ENCODE measurements at regions of chr9 and their contacts with region 1.

Region 1: GRCh38 chr9:16726718-16727451 is 143.6 kb downstream of the BNC2 start:
- DNase-seq: peak; percentile 66
- H3K4me3 ChIP-seq: peak overlapping the region; percentile 46 to 64 (median 52)
- H3K27ac ChIP-seq: peak overlapping the region; percentile 74 to 88 (median 85)
- H3K4me1 ChIP-seq: peaks cover 0 to 8% (median 0%) of the 10 kb centered on the region in 4 donors
- H3K27me3 ChIP-seq: no peaks in the 10 kb centered on the region
- CTCF ChIP-seq: no peak
- EP300 ChIP-seq: no peak
- POLR2A ChIP-seq: peak; percentile 35

Region 2: GRCh38 chr9:16207161-16207560 is 519.7 kb before region 1 on chr9:
- in situ Hi-C with region 1: no loop called
- intact Hi-C with region 1: loop called (anchors 10 kb)
- DNase-seq: no peak
- H3K4me3 ChIP-seq: no peak overlapping the region
- H3K27ac ChIP-seq: peak overlapping the region in 1 of 4 donors; percentile 11
- H3K4me1 ChIP-seq: peaks cover 0 to 4% (median 2%) of the 10 kb centered on the region in 4 donors
- H3K27me3 ChIP-seq: no peaks in the 10 kb centered on the region
- CTCF ChIP-seq: no peak
- EP300 ChIP-seq: no peak
- POLR2A ChIP-seq: no peak

Region 3: GRCh38 chr9:16611983-16612382 is 114.9 kb before region 1 on chr9:
- in situ Hi-C with region 1: no loop called
- intact Hi-C with region 1: no loop called
- DNase-seq: no peak
- H3K4me3 ChIP-seq: no peak overlapping the region
- H3K27ac ChIP-seq: no peak overlapping the region
- H3K4me1 ChIP-seq: no peaks in the 10 kb centered on the region
- H3K27me3 ChIP-seq: no peaks in the 10 kb centered on the region
- CTCF ChIP-seq: no peak
- EP300 ChIP-seq: no peak
- POLR2A ChIP-seq: no peak

Region 4: DNA sequence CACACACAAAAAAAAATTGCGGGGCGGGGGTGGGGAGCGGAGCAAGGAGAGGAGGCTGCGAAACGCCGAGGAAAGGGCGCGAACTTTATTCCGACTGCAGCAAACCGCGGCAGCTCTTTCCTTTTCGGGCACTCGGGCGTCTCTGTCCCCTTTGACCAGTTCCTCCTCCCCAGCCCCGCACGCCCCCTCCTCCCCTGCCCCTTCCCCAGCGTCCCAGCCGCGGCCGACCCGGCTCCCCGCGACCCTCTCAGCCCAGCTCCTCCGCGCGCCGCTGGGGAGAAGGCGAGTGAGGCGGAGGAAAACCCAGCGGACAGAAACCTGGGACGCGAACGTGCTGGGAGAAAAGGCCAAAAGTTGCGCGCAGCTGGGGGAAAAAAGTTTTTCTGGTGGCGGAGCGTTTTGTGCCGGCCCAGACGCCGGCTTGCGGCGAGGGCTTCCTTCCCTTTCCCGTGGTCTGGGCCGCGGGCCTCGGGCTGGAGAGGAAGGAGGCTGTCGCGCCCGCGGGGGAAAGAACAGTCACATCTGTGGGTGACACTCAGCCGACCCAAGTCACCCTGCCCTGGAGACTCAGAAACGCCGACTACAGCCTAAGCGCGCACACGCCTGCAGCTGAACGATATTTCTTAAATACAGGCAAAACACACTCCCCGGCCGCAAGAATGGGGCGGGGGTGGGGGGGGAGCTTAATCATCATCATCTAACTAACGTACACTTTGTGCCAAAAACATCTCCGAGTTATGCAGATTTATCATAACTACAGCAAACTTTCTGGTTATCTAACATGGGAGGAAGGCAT is 144.7 kb after region 1 on chr9:
- in situ Hi-C with region 1: loop called in 1 of 4 experiments (anchors 10 kb)
- intact Hi-C with region 1: loop called (anchors 10 kb)
- DNase-seq: peak; percentile 44
- H3K4me3 ChIP-seq: peak overlapping the region; percentile 61 to 90 (median 70)
- H3K27ac ChIP-seq: peak overlapping the region; percentile 82 to 93 (median 90)
- H3K4me1 ChIP-seq: peaks cover 3 to 29% (median 5%) of the 10 kb centered on the region in 4 donors
- H3K27me3 ChIP-seq: peaks cover 45% of the 10 kb centered on the region
- CTCF ChIP-seq: peak in 1 of 5 experiments; percentile 6
- EP300 ChIP-seq: no peak
- POLR2A ChIP-seq: no peak

Region 5: DNA sequence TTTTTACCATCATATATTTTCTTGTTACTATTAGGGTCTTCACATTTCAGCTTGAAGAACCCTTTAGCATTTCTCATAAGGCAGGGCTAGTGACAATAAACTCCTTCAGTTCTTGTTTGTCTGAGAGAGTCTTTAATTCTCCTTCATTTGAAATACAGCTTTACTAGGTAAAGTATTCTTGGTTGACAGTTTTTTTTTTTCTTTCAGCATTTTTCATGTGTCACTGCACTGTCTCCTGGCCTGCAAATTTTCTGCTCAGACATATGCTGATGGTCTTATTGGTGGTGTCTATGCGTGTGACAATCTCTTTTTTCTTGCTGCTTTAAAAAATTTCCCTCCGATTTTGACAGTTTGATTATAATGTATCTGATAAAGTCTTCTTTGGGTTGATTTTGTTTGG is 1251.9 kb after region 1 on chr9:
- in situ Hi-C with region 1: no loop called
- intact Hi-C with region 1: no loop called
- DNase-seq: no peak
- H3K4me3 ChIP-seq: no peak overlapping the region
- H3K27ac ChIP-seq: no peak overlapping the region
- H3K4me1 ChIP-seq: no peaks in the 10 kb centered on the region
- H3K27me3 ChIP-seq: no peaks in the 10 kb centered on the region
- CTCF ChIP-seq: no peak
- EP300 ChIP-seq: no peak
- POLR2A ChIP-seq: no peak

Measured in transverse colon (tissue), 4 donors.